ENCODE measurements at regions of chr9 and their contacts with region 1.

Region 1: DNA sequence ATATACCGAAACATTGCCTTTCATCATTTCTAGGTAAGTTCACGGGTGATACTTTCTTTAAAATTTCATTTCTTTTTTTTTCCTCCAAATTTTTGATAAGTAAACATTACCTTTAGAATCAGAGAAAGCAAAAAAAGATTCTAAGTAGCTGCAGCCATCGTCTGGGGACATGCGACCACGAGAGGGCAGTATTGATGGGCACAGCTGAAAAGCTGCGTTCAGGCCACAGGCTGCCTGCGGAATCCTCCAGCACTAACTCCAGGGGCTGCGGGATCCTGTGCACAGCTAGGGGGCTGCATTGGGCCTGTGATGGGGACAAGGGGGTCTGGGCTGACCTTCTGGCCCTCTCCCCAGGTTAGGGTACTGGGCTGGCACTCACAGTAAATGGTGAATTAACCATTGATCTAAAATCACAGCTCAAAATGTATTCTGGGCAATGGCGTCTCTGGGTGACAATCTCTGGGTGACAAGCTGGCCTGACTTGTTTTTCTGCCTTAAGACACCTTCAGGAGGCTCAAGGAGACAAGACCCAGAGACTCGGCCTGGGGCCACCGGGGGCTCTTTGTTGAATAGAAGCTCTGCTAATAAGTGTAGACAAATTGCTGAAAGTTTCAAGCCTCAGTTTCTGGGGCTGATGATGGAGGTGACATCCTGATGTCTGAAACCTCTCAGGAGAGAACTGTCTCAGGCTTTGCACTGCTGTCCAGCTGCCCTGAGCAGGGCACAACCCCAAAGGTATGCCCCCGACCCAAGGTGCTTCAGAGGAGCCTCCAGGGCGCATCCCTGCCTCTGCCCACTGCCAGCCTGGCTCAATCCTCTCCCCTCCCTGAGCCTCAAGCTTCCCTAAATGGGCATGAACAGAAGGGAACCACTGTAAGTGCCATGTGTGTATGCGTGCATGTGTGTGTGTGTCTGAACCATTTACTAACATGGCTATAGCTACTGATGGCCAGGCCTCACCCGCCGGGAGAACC is 44.3 kb upstream of the SARDH start:
- DNase-seq: peak; percentile 83
- ATAC-seq: peak; percentile 88
- H3K4me3 Mint-ChIP-seq: no peak overlapping the region
- H3K27ac Mint-ChIP-seq: no peak overlapping the region
- H3K4me1 Mint-ChIP-seq: no peaks in the 10 kb centered on the region
- H3K27me3 Mint-ChIP-seq: no peaks in the 10 kb centered on the region
- CTCF ChIP-seq: no peak; the same call in 1 of the 2 replicates

Region 2: DNA sequence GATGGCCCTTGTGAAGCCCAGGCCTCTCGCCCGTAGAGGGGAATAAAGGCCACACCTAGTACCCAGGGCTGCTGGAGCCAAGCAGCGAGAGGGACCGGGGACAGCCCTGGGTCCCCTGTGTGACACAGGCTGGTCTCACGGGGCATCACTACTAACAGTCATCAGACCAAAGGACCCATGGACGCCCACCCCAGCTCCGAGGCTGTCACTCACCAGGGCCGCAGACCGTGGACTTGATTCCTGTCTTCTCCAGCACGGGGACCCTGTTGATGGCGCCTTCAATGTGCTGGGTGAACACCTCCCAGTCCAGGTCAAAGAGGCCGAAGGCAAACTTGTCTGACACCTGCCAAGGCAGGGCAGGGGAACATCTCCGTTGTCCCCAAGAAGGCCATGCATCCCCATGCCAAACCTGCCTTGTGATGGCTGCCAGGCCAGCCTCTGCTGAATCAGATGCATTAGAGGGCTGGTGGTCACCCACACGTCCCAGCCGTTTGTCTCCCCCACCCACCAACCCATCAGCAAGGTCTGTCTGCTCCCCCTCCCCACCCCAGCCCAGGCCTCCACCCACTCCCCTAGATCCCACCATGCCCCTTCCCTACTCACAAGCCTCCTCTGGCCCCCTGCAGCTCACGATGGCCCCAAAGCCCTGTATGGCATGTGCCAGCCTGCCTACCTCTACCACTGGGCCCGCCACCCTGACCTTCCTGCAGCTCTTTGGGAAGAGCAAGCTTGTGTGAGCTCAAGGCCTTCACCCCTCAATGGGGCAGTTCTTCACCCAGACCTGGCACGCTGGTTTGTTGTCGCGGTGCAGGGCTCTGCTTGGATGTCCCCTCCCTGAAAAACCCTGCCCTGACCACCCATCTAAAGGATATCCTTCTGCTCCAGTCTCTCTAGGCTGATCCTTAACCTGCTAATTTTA is 65.1 kb before region 1 on chr9:
- CTCF ChIA-PET with region 1: no interaction called
- POLR2A ChIA-PET with region 1: no interaction called
- DNase-seq: no peak
- ATAC-seq: no peak
- H3K4me3 Mint-ChIP-seq: no peak overlapping the region
- H3K27ac Mint-ChIP-seq: no peak overlapping the region
- H3K4me1 Mint-ChIP-seq: peaks cover 5% of the 10 kb centered on the region
- H3K27me3 Mint-ChIP-seq: no peaks in the 10 kb centered on the region; the same call in 1 of the 2 replicates
- CTCF ChIP-seq: no peak

Region 3: GRCh38 chr9:133768859-133769425 is 13.5 kb before region 1 on chr9:
- CTCF ChIA-PET with region 1: interaction called, 24 read pairs
- POLR2A ChIA-PET with region 1: interaction called, 3 read pairs
- DNase-seq: peak; percentile 70
- ATAC-seq: peak; percentile 65; the same call in 1 of the 2 replicates
- H3K4me3 Mint-ChIP-seq: no peak overlapping the region
- H3K27ac Mint-ChIP-seq: no peak overlapping the region
- H3K4me1 Mint-ChIP-seq: no peaks in the 10 kb centered on the region
- H3K27me3 Mint-ChIP-seq: no peaks in the 10 kb centered on the region
- CTCF ChIP-seq: no peak

Region 4: DNA sequence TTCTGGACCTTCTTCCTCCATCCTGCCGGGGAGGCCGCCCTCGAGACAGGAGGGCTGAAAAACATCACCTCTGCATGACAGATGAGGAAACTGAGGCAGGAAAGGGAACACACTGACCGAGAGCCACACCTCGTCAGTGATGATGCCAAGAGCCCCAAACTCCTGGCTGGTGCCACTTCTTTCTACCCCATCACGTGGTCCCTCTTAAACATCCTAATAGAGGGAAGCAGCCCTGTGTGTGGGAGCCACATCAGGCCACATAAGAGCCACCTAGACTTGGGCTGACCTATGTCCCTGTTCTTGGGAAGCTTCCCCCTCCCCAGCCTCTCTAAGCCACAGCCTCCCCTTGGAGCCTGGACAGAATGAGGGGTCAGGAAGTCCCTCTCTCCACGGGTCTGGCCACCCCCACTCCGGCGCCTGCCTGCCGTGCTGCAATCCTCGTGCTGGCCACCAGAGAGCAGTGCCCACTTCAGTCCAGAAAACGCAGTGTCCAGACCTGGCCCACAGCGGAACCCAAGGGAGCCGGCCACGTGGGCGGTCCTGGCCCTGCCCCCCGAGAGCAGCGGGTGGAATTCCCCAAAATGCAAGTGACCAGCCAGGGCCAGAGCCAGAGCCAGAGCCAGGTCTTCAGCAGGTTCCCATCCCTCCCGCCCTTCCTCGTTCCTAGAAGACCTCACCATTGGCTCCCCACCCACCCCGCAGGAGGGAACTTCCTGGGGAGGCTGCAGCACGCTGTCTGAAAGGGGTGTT is 10.5 kb after region 1 on chr9:
- CTCF ChIA-PET with region 1: interaction called, 11 read pairs
- POLR2A ChIA-PET with region 1: no interaction called
- DNase-seq: peak; percentile 80
- ATAC-seq: peak; percentile 83
- H3K4me3 Mint-ChIP-seq: no peak overlapping the region
- H3K27ac Mint-ChIP-seq: no peak overlapping the region; the same call in 1 of the 2 replicates
- H3K4me1 Mint-ChIP-seq: no peaks in the 10 kb centered on the region
- H3K27me3 Mint-ChIP-seq: no peaks in the 10 kb centered on the region
- CTCF ChIP-seq: peak; percentile 81

Region 5: DNA sequence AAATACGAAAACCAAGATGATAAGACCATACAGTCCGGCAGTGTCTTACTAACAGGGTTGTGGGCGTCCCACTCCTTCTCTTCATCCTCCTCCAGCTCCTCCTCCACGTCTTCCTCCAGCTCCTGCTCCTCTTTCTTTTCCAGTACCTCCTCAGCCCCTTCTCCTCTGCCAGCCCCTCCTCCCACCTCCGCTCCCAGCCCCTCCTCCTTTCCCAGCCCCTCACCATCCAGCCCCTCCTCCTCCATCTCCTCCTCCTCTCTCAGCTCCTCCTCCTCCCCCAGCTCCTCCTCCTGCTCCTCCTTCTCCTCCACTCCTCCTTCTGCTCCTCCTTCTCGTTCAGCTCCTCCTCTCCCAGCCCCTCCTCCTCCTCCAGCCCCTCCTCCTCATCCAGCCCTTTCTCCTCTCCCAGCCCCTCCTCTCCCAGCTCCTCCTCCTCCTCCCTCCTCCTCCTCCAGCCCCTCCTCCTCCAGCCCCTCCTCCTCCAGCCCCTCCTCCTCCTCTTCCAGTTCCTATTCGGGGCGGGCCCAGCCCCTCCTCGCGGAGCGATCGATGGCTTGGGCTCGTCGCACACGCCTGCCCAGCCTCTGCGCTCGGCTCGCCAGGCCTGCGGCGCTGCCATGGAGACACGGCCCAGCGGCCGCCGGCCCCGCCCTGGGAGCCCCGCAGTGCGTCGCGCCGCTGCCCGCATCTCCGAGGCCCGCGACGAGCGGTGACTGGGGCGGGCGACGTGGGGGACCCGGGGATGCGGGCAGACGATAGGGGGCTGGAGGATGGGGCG is 242.6 kb after region 1 on chr9 and contains the start of gene BRD3OS:
- CTCF ChIA-PET with region 1: interaction called, 19 read pairs
- POLR2A ChIA-PET with region 1: no interaction called
- DNase-seq: peak; percentile 95
- ATAC-seq: peak; percentile 96
- H3K4me3 Mint-ChIP-seq: peak within 1 kb of the TSS; percentile 68
- H3K27ac Mint-ChIP-seq: no peak within 1 kb of the TSS
- H3K4me1 Mint-ChIP-seq: peaks cover 10% of the 10 kb centered on the region; the same call in 1 of the 2 replicates
- H3K27me3 Mint-ChIP-seq: no peaks in the 10 kb centered on the region
- CTCF ChIP-seq: no peak
- total RNA-seq, gene BRD3OS: 16.2 to 16.9 TPM (median 16.6 TPM) in 3 replicates